Panc1 (cell line): ENCODE measurements at regions of chr6 and their contacts with region 1.

Region 1: DNA sequence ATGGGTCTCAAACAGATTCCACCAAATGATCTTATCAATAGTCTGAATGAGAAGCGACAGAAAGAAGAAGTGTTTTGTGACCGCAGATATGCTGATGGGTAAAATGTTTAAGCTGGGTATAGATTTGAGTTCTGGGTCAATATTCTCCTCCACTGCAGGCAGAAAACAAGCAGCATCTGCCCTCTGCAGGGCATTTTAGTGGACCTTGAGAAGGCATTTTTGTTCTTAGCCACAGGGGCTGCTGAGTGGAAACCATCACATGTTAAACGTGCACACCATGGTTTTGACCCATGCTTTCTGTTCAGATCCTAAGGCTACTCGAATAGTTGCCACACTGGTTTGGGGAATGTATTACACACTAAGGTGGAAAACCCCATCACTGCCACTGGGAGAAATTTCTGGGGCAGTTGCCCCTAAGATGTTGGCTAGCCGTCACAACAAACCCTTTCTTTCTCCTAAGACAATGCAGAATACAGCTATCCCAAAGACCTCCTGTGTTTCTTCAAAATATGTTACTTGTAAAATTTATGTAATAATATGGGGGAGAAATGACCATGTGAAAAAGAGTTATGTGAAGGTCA is 5.5 kb downstream of the POU3F2 start:
- DNase-seq: no peak
- ATAC-seq: no peak
- H3K4me3 ChIP-seq: no peak overlapping the region
- H3K27ac ChIP-seq: no peak overlapping the region
- H3K4me1 ChIP-seq: peaks cover 3% of the 10 kb centered on the region
- H3K27me3 ChIP-seq: peaks cover 69% of the 10 kb centered on the region
- CTCF ChIP-seq: peak; percentile 64

Region 2: DNA sequence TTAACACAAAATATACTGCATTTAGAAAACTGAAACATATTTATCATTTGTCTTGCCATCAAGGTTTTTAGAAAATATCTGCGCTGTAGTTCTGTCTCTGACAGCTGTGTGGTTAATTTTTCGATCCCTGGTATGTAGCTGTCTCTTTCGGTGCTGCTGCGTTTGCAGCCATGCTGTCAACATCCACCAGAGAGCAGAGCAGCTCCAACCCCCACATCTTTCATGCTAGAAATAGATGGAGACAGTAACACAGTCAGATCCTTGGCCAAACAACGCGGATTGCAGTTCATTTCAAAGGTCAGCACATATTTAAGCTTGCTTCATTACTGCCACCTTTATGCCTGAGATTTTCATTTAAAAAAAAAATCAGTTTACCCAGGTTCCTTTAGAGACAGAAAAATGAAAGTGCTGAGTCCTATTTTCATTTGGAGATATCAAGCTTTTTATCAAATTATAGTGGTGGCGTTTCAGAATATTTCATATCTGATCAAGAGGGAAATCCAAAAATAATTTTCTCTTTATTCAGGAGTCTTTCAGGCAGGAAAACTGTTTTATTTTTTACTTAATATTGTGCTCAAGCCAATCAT is 1399.2 kb before region 1 on chr6:
- CTCF ChIA-PET with region 1: no interaction called
- POLR2A ChIA-PET with region 1: no interaction called
- in situ Hi-C with region 1: no loop called
- intact Hi-C with region 1: loop called (anchors 5 kb)
- DNase-seq: peak; percentile 12
- ATAC-seq: peak; percentile 91
- H3K4me3 ChIP-seq: no peak overlapping the region
- H3K27ac ChIP-seq: no peak overlapping the region
- H3K4me1 ChIP-seq: no peaks in the 10 kb centered on the region
- H3K27me3 ChIP-seq: no peaks in the 10 kb centered on the region
- CTCF ChIP-seq: peak; percentile 79

Region 3: DNA sequence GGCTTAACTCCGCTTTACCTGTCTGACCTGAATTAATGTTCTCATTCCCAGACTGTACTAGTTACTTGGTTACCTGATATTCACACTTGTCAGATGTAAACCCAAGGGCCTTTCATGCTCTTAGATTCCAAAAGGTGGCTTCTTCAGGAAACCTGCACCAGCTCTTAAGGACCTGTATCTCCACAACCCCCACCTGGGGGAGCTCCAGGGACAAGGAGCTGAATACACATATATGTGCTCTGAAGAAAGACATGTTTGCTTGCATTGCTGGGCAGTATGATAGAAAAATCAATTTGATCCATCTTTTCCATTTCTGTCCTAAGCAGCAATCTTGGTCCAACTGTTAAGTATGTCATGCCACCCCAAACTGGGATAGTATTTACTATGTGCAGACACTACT is 70.3 kb before region 1 on chr6:
- CTCF ChIA-PET with region 1: no interaction called
- POLR2A ChIA-PET with region 1: no interaction called
- in situ Hi-C with region 1: no loop called
- intact Hi-C with region 1: loop called (anchors 5 kb)
- DNase-seq: no peak
- ATAC-seq: peak; percentile 65; the same call in 1 of the 2 replicates
- H3K4me3 ChIP-seq: no peak overlapping the region
- H3K27ac ChIP-seq: no peak overlapping the region
- H3K4me1 ChIP-seq: no peaks in the 10 kb centered on the region
- H3K27me3 ChIP-seq: no peaks in the 10 kb centered on the region
- CTCF ChIP-seq: peak; percentile 45

Region 4: GRCh38 chr6:98871057-98871456 is 31.2 kb after region 1 on chr6:
- CTCF ChIA-PET with region 1: no interaction called
- POLR2A ChIA-PET with region 1: no interaction called
- in situ Hi-C with region 1: no loop called
- intact Hi-C with region 1: no loop called
- DNase-seq: no peak
- ATAC-seq: peak; percentile 83
- H3K4me3 ChIP-seq: no peak overlapping the region
- H3K27ac ChIP-seq: no peak overlapping the region
- H3K4me1 ChIP-seq: peaks cover 4% of the 10 kb centered on the region; the same call in 1 of the 2 replicates
- H3K27me3 ChIP-seq: no peaks in the 10 kb centered on the region
- CTCF ChIP-seq: no peak